Activated CD4-positive, alpha-beta memory T cell treated with anti-CD3 and anti-CD28 coated beads, Interleukin-2, amount 10 ng/mL, durations not matched to agents 7 days and 5 days (primary cell): ENCODE measurements at regions of chr14 and their contacts with region 1.

Region 1: DNA sequence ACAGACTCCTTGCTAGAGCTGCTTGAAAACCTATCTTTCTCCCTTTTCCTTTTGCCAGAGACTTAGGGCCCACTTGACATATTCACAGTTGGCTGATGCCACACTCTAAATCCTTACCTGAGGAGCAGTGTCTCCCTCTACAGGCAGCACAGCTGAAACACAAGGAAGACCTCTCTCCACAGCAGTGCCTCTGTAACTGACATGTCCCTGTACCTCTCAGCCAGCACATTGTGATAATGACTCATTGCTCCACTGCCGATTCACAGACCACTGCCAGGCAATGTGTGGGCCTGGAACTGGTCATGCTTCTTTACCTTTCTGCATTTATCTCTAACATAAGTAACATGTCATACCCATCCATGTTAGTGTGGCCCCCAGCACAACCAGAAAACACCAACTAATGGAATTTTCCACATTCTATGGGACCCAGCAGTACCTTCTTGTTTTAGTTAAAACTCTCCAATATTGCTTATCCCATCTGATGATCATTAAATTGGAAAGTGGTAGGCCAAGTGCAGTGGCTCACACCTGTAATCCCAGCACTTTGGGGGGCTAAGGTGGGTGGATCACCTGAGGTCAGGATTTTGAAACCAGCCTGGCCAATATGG is 56.5 kb downstream of the GTF2A1 start:
- DNase-seq: peak; percentile 67
- H3K4me3 Mint-ChIP-seq: no peak overlapping the region
- H3K27ac Mint-ChIP-seq: no peak overlapping the region
- H3K4me1 Mint-ChIP-seq: peaks cover 20% of the 10 kb centered on the region
- H3K27me3 Mint-ChIP-seq: no peaks in the 10 kb centered on the region

Region 2: DNA sequence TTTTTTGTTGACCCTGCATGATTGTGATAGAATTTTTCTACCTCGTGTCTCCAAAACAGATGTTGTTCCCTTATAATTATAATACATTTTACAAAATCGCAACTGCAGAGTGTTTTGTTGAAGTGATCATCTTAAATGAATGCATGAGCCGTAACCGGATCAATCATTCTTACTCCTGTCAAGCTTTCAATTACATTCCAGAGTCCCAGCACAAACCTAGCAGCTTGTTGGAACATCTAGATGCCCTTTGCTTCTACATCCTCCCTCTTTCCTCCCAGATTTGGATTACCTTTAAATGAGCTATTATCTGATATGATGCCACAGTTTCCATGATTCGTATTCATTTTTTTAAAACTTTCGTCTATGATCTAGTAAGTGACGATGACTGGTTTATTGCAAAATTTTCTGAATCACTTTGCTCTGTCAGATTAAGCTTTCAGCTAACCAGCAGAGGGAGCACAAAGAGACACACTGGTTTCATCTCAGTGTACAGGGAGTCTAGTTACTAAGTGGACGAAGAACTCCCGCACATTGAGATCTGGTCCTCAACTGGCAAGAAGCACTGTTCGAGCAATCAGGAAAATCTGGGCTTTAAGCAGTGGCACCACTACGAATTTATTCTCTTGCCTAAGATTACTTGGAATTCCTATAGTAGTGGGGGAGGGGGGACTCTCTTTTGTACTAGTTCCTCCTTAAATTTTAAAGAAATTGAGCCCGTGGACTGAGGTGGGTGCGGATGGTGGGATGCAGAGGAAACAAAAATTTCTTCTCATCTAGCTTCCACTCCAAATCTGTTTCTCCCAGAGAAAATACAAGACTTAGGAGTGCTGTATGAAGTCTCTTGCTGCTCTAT is 168.0 kb before region 1 on chr14:
- CTCF ChIA-PET with region 1: interaction called, 31 read pairs
- POLR2A ChIA-PET with region 1: no interaction called
- DNase-seq: peak; percentile 24
- H3K4me3 Mint-ChIP-seq: no peak overlapping the region
- H3K27ac Mint-ChIP-seq: no peak overlapping the region
- H3K4me1 Mint-ChIP-seq: peaks cover 7% of the 10 kb centered on the region
- H3K27me3 Mint-ChIP-seq: peaks cover 35% of the 10 kb centered on the region

Region 3: GRCh38 chr14:81137316-81137715 is 27.0 kb before region 1 on chr14:
- CTCF ChIA-PET with region 1: no interaction called
- POLR2A ChIA-PET with region 1: no interaction called
- DNase-seq: no peak
- H3K4me3 Mint-ChIP-seq: no peak overlapping the region
- H3K27ac Mint-ChIP-seq: no peak overlapping the region
- H3K4me1 Mint-ChIP-seq: no peaks in the 10 kb centered on the region
- H3K27me3 Mint-ChIP-seq: no peaks in the 10 kb centered on the region

Region 4: DNA sequence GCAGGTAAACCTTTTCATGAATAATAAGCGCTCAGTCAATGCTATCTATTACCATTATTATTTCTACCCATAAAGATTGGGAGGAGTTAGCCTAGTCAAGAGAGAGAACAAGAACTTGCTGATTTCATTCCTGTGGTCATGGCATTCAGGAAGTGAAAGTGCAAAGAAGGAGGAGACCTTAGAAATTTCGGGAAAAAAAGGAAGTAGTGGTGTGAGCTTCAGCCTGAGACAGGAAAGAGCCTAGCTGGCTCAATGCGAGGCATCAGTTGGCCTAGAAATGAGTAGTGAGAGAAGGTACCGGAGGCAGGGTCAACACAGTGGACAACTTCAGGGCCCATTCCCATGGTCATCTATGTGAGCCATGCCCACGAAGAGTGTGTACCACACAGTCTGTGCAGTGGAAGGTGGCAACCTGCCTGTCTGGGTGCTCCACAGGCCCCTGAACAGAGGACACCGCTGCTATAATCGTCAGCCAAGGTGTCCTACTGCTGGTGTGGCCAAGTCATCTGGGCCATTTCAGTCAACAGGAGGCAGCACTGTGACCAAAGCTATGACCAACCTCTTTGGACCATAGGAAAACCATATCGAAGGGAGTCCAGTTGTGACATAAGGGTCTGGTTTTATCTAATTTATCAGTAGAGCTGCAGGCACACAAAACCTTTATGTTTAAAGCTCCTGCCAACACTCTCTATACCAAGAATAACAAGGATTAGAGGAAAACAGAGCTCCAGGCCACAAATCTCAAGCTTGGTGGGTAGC is 252.1 kb after region 1 on chr14:
- CTCF ChIA-PET with region 1: no interaction called
- POLR2A ChIA-PET with region 1: no interaction called
- DNase-seq: no peak
- H3K4me3 Mint-ChIP-seq: no peak overlapping the region
- H3K27ac Mint-ChIP-seq: no peak overlapping the region
- H3K4me1 Mint-ChIP-seq: peaks cover 4% of the 10 kb centered on the region
- H3K27me3 Mint-ChIP-seq: peaks cover 9% of the 10 kb centered on the region

Region 5: DNA sequence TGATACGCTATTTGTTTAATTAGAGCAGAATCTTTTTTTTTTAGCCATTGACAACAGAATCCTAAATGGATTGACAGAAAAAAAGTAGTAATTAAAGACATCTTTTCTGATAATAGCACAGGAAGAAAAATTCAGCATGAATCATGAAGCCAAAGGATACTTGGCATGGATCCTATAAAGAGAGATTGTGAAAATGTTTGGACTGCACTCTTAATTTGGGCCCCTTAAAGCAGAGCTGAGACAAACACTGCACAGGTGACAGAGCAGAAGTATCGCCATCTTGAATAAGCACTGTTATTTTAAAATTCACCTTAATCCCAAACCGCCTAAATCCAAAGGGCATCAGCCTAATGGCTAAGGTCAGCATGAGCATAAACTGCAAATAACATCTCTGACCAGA is 418.1 kb after region 1 on chr14:
- CTCF ChIA-PET with region 1: no interaction called
- POLR2A ChIA-PET with region 1: no interaction called
- DNase-seq: no peak
- H3K4me3 Mint-ChIP-seq: no peak overlapping the region
- H3K27ac Mint-ChIP-seq: no peak overlapping the region
- H3K4me1 Mint-ChIP-seq: no peaks in the 10 kb centered on the region
- H3K27me3 Mint-ChIP-seq: peaks cover 11% of the 10 kb centered on the region